K562 (cell line): ENCODE measurements at regions of chr1 and their contacts with region 1.

Region 1: DNA sequence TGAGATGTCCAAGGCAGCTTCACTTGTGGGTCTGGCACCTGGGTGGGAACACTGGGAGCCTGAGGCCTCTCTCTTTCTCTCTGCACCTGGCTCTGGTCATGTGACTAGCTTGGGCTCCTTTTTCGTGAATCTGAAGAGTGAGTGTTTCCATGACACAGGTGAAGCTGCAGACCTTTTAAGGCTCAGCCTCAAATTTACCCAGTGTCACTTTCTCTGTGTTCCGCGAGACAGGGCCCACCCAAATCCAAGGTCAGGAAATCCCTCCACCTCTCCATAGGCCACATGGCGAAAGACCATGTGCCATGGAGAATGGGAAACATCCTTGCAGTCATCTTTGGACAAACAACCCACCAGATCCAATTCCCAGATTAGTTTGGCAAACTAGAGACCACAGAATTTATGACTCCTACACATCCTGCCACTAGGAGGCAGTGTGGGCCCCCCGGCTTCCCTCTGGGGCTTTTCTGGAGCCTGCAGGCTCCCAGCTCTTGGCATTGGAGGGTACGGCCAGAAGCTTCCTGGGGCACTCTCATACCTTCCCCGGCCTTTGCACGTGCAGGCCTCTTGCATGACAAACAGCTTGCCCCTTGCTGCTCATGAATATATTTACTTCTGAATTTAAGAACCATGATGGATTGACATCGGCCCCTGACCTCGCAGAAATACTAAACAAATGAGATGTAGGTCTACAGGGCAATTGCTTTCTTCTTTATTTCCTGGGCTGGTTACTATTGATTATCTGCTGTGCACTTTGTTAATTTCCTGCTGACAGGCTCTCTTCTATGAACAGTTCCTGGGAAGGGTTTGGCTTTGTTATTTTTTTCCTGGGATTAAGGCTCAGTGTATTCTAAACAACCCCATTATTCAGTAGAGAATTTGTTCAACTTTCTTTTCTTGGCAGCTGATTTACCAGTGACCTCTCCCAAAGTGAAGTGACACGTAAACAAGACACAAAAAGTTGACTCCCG is 180.7 kb downstream of the KAZN start:
- DNase-seq: peak; percentile 77 to 87 (median 78)
- ATAC-seq: peak; percentile 30
- H3K4me3 ChIP-seq: no peak overlapping the region
- H3K27ac ChIP-seq: peak overlapping the region; percentile 95
- H3K4me1 ChIP-seq: peaks cover 61 to 71% of the 10 kb centered on the region in 2 experiments
- H3K27me3 ChIP-seq: no peaks in the 10 kb centered on the region
- CTCF ChIP-seq: peak; percentile 86 to 97 (median 94)
- EP300 ChIP-seq: 0 out of 2 replicates have a peak, but pooled peaks have one; percentile 24
- POLR2A ChIP-seq: no peak
- RAD21 ChIP-seq: peak; percentile 64 to 84

Region 2: GRCh38 chr1:14435368-14436023 is 343.7 kb before region 1 on chr1:
- CTCF ChIA-PET with region 1: no interaction called
- POLR2A ChIA-PET with region 1: no interaction called
- in situ Hi-C with region 1: no loop called
- intact Hi-C with region 1: loop called (anchors 5 kb)
- DNase-seq: peak; percentile 84 to 90 (median 87)
- ATAC-seq: peak; percentile 81
- H3K4me3 ChIP-seq: no peak overlapping the region
- H3K27ac ChIP-seq: peak overlapping the region; percentile 83
- H3K4me1 ChIP-seq: peaks cover 32 to 50% of the 10 kb centered on the region in 2 experiments
- H3K27me3 ChIP-seq: no peaks in the 10 kb centered on the region
- CTCF ChIP-seq: peak; percentile 81 to 93 (median 81)
- EP300 ChIP-seq: peak; percentile 90
- POLR2A ChIP-seq: no peak
- RAD21 ChIP-seq: peak; percentile 70 to 83

Region 3: DNA sequence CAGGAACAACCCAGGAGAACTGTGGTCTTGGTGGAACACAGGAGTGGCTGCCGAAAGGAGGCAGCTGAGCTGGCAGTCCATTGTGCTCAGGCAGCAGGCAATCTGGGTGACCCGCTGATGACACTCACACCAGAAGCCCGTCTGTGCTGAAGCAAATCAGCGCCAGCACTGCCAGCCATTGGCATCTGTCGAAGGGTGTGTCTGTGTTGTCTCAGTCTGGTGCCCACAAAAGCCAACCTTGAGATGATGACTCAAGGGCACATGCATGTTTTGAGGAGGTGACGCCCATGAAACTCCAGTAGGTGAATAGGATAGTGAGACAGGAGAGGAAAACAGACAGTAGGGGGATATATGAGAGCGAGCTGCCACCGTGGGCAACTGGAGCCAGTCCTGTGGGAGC is 13.4 kb before region 1 on chr1:
- CTCF ChIA-PET with region 1: no interaction called
- POLR2A ChIA-PET with region 1: interaction called, 45 read pairs
- in situ Hi-C with region 1: no loop called
- intact Hi-C with region 1: no loop called
- DNase-seq: no peak
- ATAC-seq: no peak
- H3K4me3 ChIP-seq: no peak overlapping the region
- H3K27ac ChIP-seq: no peak overlapping the region
- H3K4me1 ChIP-seq: peaks cover 0 to 11% of the 10 kb centered on the region in 2 experiments; a peak in 2 of 5 replicates
- H3K27me3 ChIP-seq: peaks cover 8 to 16% of the 10 kb centered on the region in 2 experiments; a peak in 3 of 5 replicates
- CTCF ChIP-seq: no peak
- EP300 ChIP-seq: no peak
- POLR2A ChIP-seq: no peak
- RAD21 ChIP-seq: no peak

Region 4: GRCh38 chr1:14850566-14850965 is 71.4 kb after region 1 on chr1:
- CTCF ChIA-PET with region 1: no interaction called
- POLR2A ChIA-PET with region 1: interaction called, 3 read pairs
- in situ Hi-C with region 1: no loop called
- intact Hi-C with region 1: loop called (anchors 2 kb)
- DNase-seq: peak; percentile 36 to 55 (median 38)
- ATAC-seq: peak; percentile 85
- H3K4me3 ChIP-seq: no peak overlapping the region
- H3K27ac ChIP-seq: no peak overlapping the region
- H3K4me1 ChIP-seq: peaks cover 0 to 6% of the 10 kb centered on the region in 2 experiments; a peak in 4 of 5 replicates
- H3K27me3 ChIP-seq: peaks cover 31 to 37% of the 10 kb centered on the region in 2 experiments
- CTCF ChIP-seq: peak; percentile 55 to 75 (median 74)
- EP300 ChIP-seq: no peak
- POLR2A ChIP-seq: no peak
- RAD21 ChIP-seq: peak; percentile 78 to 85

Region 5: GRCh38 chr1:15028102-15028501 is 248.9 kb after region 1 on chr1:
- CTCF ChIA-PET with region 1: no interaction called
- POLR2A ChIA-PET with region 1: interaction called, 4 read pairs
- in situ Hi-C with region 1: loop called (anchors 10 kb)
- intact Hi-C with region 1: loop called (anchors 5 kb)
- DNase-seq: no peak
- ATAC-seq: no peak
- H3K4me3 ChIP-seq: no peak overlapping the region
- H3K27ac ChIP-seq: no peak overlapping the region
- H3K4me1 ChIP-seq: peaks cover 5 to 8% of the 10 kb centered on the region in 2 experiments; a peak in 1 of 5 replicates
- H3K27me3 ChIP-seq: no peaks in the 10 kb centered on the region
- CTCF ChIP-seq: no peak
- EP300 ChIP-seq: no peak
- POLR2A ChIP-seq: no peak
- RAD21 ChIP-seq: no peak